ENCODE measurements at regions of chr4 and their contacts with region 1.

Region 1: DNA sequence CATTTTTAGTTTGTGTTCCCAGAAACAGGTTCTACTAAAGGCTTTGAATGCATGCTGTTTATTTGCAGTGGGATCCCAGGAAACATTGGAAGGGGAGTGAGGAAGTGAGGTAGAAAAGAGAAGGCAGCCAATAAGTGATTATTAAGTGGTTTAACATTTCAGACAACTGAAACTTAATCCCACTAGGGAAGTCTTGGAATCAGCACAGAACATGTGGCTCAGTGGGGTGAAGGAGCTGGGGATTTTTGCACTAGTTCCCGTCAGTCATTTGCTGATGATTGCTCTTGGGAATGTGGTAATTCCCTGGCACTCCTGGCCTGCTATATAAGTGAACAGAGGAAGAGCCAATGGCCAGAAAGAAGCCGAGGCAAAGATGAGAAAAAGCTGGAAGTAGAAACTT is 1053.0 kb upstream of the IGFBP7 start:
- DNase-seq: no peak
- ATAC-seq: no peak

Region 2: DNA sequence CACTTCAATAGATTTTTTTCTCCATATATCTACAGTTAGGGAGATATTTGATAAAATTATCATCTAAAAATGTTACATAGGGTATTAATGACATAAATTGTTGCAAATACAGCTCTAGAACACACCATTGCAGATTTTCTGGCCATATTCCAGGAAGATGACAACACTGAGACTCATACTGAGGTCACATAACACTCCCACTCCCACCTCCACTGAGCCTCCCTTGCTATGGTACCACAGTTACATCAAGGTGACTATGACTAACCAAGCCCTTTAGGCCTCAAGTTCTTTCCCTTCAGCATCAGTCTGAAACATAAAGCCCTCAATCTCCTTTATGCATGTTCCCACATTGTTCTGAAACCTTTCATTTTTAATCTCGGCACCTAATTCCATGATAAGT is 121.0 kb before region 1 on chr4:
- intact Hi-C with region 1: no loop called
- DNase-seq: no peak
- ATAC-seq: no peak

Region 3: GRCh38 chr4:58093352-58093751 is 69.8 kb before region 1 on chr4:
- intact Hi-C with region 1: no loop called
- DNase-seq: no peak
- ATAC-seq: no peak

Region 4: DNA sequence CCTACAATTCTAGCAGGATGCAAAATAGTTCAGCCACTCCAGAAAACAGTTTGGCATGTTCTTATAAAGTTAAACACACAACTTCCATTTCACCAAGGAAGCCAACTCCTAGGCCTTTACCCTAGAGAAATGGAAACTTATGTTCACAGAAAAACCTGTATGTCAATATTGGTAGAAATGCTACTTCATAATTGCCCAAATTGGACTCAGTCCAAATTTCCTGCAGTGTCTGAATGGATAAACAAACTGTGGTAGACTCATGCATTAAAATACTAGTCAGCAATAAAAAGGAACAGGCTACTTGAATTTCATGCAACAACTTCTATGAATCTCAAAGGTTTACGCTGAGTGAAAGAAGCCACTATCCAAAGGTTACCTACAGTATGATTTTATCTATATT is 685.9 kb after region 1 on chr4:
- intact Hi-C with region 1: loop called (anchors 5 kb)
- DNase-seq: no peak
- ATAC-seq: no peak